Calu3 (cell line): ENCODE measurements at regions of chr5 and their contacts with region 1.

Region 1: DNA sequence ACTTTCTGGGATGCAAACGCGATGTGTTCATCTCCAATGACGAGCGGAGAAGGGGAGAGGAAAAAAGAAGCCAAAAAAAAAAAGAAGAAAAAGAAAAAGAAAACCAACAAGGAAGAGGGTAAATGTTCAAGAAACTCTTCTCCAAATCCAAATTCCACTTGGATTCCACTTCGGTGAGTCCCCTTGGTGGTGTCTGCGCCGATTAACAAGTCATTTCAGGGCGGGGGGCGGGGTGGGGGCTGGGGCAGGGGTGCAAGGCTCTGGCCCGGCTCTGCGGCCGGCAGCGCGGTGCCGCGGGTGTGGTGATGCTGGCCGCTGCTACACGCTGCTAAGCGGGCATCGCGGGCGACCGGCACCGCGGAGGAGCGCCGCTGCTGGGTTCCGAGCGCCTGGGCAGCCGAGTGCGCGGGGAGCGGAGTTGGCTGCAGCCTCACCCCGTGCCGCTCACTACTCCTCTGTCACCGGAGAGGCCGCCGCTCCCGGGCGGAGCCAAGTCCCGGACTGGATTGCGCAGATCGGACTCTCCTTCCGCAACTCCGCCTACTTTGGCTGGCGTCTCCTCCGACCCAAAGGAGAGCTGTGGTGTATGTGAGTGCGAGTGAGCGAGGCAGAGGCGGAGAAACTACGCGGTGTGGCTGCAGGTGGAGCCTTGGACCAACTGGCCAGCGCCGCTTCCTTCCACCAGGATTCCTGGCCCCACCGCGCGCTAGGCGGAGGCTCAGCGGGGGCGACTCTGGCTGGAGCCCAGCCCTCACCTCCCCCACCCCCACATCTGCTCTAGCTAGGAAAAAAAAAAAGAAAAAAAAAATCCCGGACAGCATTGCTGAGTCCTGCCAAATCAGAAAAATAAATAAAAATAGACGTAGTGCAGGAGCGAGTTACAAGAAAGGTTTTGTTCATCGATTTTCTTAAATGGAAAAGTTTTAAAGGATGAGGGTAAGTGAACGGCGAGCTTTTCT is at the start of gene SEMA6A:
- DNase-seq: peak; percentile 99
- H3K4me3 Mint-ChIP-seq: peak within 1 kb of the TSS; percentile 96
- H3K27ac Mint-ChIP-seq: peak within 1 kb of the TSS; percentile 81
- H3K4me1 Mint-ChIP-seq: peaks cover 25% of the 10 kb centered on the region
- H3K27me3 Mint-ChIP-seq: no peaks in the 10 kb centered on the region
- CTCF ChIP-seq: no peak
- total RNA-seq, gene SEMA6A: 53.3 and 54.7 TPM in 2 replicates

Region 2: DNA sequence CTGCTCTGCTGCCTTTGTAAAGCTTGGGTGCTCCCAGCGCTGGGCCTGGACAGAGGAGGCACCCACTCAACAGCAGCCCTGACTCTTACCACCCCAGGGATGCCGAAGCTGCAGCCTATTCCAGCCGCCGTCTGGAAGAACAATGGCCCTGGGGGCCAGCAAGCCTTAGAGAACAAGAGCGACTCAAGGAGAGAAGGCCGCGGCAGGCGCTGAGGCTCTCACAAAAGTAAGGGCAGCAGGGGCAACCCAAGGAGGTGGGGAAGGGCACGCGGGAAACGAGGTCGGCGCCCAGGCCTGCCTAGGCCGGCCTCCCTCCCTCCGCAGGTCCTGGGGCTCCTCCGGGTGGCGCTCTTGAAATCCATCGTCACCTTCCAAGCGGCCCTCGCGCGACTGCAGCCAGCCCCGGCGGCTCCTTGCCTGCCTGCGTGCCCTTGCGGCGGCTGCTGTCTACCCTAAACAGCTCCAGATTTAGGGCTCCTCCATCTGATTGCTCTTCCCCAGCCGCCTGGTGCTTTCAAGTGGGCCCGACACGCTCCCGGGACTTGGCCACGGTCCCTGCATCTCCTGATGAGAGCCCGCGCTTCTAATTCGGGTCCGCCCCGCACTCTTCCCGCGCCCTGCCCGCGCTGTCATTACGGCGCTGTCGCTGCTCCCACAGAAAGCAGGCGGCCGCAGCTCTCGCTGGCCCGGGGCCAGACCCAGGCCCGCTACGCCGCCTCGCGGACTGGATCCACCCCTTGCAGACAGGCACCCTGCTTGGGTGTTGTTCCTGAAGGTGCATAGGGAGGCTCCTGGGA is 213.3 kb before region 1 on chr5:
- CTCF ChIA-PET with region 1: no interaction called
- intact Hi-C with region 1: loop called (anchors 1 kb)
- DNase-seq: peak; percentile 78
- H3K4me3 Mint-ChIP-seq: peak overlapping the region; percentile 94
- H3K27ac Mint-ChIP-seq: peak overlapping the region; percentile 30
- H3K4me1 Mint-ChIP-seq: peaks cover 10% of the 10 kb centered on the region
- H3K27me3 Mint-ChIP-seq: no peaks in the 10 kb centered on the region
- CTCF ChIP-seq: no peak

Region 3: DNA sequence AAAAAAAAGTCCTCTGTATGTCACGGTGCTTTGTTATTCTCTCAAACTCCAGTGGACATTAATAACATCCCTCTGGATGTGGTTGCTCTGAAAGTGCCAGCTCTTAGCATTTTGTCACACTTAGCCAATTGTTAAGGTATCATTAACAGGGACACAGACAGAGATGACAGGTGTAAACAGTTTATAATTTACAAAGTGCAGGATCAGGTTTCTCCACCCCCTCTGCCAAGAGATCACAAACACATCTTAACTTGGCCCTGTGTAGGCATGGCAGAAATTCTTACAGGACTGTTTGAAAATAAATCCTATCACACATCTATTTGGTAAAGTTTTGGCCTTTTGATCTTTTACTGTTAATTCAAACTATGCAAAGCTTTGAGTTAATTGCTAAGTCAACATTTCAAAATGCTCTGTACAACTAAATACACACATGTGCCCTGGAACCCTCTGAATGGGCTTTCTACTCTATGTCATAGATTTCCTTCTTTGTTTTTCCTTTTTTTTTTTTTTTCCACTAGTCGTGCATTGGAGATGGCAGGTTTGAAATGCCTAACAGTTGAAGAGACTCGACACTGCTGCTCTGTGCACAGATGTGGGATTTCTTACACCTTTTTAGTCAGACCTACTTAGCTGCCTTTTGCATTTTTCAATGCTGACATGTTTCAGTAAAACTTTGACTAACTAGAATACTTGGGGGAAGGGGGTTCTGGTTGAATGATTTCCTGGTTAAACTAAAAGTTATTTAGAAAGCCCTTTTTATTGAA is 41.7 kb before region 1 on chr5:
- CTCF ChIA-PET with region 1: interaction called, 6 read pairs
- intact Hi-C with region 1: loop called (anchors 2 kb)
- DNase-seq: no peak
- H3K4me3 Mint-ChIP-seq: peak overlapping the region; percentile 27
- H3K27ac Mint-ChIP-seq: no peak overlapping the region
- H3K4me1 Mint-ChIP-seq: peaks cover 31% of the 10 kb centered on the region
- H3K27me3 Mint-ChIP-seq: no peaks in the 10 kb centered on the region
- CTCF ChIP-seq: no peak

Region 4: DNA sequence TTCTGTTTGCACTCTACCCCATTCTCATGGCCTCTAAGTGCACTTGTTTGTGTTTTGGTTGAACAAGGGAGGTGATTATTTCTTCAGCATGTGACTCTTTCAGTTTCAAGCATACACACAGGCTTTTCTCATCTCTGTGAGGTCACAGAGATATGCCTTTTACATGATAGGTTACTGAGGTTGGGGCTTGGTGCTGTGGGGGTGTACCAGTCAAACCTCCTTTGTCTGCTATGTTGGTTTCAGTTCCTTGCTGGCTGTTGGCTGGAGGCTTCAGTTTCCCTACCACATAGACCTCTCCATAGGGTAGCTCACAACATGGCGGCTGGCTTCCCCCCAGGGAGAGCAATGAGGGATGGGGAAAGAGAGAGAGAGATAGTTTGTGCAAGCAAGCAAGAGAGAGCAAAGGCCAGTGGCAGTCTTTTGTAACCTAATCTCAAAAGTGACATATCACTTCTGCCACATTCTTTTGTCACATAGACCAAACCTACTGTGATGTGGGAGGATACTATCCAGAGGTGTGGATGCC is 96.6 kb after region 1 on chr5:
- CTCF ChIA-PET with region 1: interaction called, 13 read pairs
- intact Hi-C with region 1: loop called (anchors 1 kb)
- DNase-seq: no peak
- H3K4me3 Mint-ChIP-seq: peak overlapping the region; percentile 39
- H3K27ac Mint-ChIP-seq: peak overlapping the region; percentile 95
- H3K4me1 Mint-ChIP-seq: peaks cover 93% of the 10 kb centered on the region
- H3K27me3 Mint-ChIP-seq: no peaks in the 10 kb centered on the region
- CTCF ChIP-seq: no peak

Region 5: DNA sequence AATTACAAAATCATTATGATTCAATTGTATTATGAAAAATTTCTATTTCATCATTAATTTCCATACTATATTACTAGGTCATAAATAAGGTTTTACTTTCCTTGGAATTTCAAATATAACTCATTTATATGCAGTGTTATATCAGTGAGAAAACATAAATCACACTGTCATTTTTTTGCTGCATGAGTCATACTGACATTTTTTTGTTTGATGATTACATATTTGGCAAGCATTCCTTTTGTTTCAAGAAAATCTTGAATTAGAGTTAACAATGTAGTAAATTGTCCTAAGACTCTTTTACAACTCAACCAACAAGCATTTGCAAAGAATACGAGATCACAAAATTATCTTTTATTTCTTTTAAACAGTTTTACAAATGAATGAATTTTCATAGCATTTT is 298.3 kb after region 1 on chr5:
- CTCF ChIA-PET with region 1: no interaction called
- intact Hi-C with region 1: loop called (anchors 5 kb)
- DNase-seq: no peak
- H3K4me3 Mint-ChIP-seq: no peak overlapping the region
- H3K27ac Mint-ChIP-seq: no peak overlapping the region
- H3K4me1 Mint-ChIP-seq: peaks cover 28% of the 10 kb centered on the region
- H3K27me3 Mint-ChIP-seq: no peaks in the 10 kb centered on the region
- CTCF ChIP-seq: no peak

Region 6: DNA sequence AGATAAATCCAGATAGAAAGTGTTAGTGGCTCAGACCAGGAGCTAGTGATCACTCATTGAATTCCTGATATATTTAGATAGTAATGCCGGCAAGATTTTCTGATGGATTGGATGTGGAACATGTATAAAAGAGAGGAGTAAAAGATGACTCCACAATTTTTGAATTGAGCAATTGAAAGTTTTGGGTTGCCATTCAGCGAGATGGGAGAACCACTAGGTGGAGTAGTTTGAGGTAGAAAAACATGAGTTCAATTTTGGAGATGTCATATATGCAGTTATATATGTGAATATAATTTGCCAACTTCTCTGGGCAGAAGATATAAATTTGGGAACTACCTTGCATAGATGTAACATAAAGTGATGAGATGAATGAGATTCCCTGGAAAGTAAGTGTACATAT is 502.5 kb after region 1 on chr5:
- CTCF ChIA-PET with region 1: no interaction called
- intact Hi-C with region 1: loop called (anchors 10 kb)
- DNase-seq: no peak
- H3K4me3 Mint-ChIP-seq: no peak overlapping the region
- H3K27ac Mint-ChIP-seq: no peak overlapping the region
- H3K4me1 Mint-ChIP-seq: no peaks in the 10 kb centered on the region
- H3K27me3 Mint-ChIP-seq: no peaks in the 10 kb centered on the region
- CTCF ChIP-seq: peak; percentile 45